ENCODE measurements at regions of chr11 and their contacts with region 1.

Region 1: GRCh38 chr11:121591405-121592033 is 138.8 kb upstream of the SORL1-AS1 start:
- DNase-seq: peak; percentile 80
- H3K4me3 Mint-ChIP-seq: no peak overlapping the region
- H3K27ac Mint-ChIP-seq: peak overlapping the region; percentile 70
- H3K4me1 Mint-ChIP-seq: peaks cover 5% of the 10 kb centered on the region
- H3K27me3 Mint-ChIP-seq: no peaks in the 10 kb centered on the region

Region 2: GRCh38 chr11:121318848-121319834 is 272.4 kb before region 1 on chr11:
- CTCF ChIA-PET with region 1: interaction called, 29 read pairs
- DNase-seq: peak; percentile 46
- H3K4me3 Mint-ChIP-seq: no peak overlapping the region
- H3K27ac Mint-ChIP-seq: peak overlapping the region; percentile 0
- H3K4me1 Mint-ChIP-seq: peaks cover 29% of the 10 kb centered on the region
- H3K27me3 Mint-ChIP-seq: no peaks in the 10 kb centered on the region

Measured in activated naive CD4-positive, alpha-beta T cell treated with anti-CD3 and anti-CD28 coated beads, Interleukin-2, amount 10 ng/mL, durations not matched to agents 7 days and 5 days (primary cell).